Naive thymus-derived CD4-positive, alpha-beta T cell (primary cell): ENCODE measurements at regions of chr6 and their contacts with region 1.

Region 1: GRCh38 chr6:90110971-90111370 is 185.7 kb downstream of the BACH2 start:
- DNase-seq: peak in 8 of 9 donors; percentile 51 to 78 (median 64)
- ATAC-seq: peak; percentile 84
- H3K4me3 ChIP-seq: no peak overlapping the region
- H3K4me3 Mint-ChIP-seq: peak overlapping the region; percentile 35 to 81 (median 58)
- H3K27ac ChIP-seq: peak overlapping the region; percentile 56
- H3K27ac Mint-ChIP-seq: peak overlapping the region; percentile 73 to 92 (median 82)
- H3K4me1 ChIP-seq: peaks cover 26 to 57% of the 10 kb centered on the region in 2 donors
- H3K4me1 Mint-ChIP-seq: peaks cover 36 to 97% (median 90%) of the 10 kb centered on the region in 7 donors
- H3K27me3 ChIP-seq: no peaks in the 10 kb centered on the region
- H3K27me3 Mint-ChIP-seq: no peaks in the 10 kb centered on the region

Region 2: GRCh38 chr6:89432875-89433251 is 678.1 kb before region 1 on chr6 and contains the start of gene ANKRD6:
- CTCF ChIA-PET with region 1: no interaction called
- POLR2A ChIA-PET with region 1: no interaction called
- intact Hi-C with region 1: no loop called
- DNase-seq: peak; percentile 61 to 96 (median 81)
- ATAC-seq: peak; percentile 98
- H3K4me3 ChIP-seq: peak within 1 kb of the TSS; percentile 63
- H3K4me3 Mint-ChIP-seq: peak within 1 kb of the TSS; percentile 83 to 95 (median 90)
- H3K27ac ChIP-seq: peak within 1 kb of the TSS; percentile 46
- H3K27ac Mint-ChIP-seq: peak within 1 kb of the TSS; percentile 43 to 93 (median 82)
- H3K4me1 ChIP-seq: peaks cover 7 to 13% of the 10 kb centered on the region in 2 donors
- H3K4me1 Mint-ChIP-seq: peaks cover 9 to 36% (median 22%) of the 10 kb centered on the region in 7 donors
- H3K27me3 ChIP-seq: no peaks in the 10 kb centered on the region
- H3K27me3 Mint-ChIP-seq: peaks cover 0 to 58% (median 0%) of the 10 kb centered on the region in 5 donors
- total RNA-seq, gene ANKRD6: 3.1 to 6.6 (median 3.8) TPM

Region 3: GRCh38 chr6:90098001-90098531 is 12.9 kb before region 1 on chr6:
- CTCF ChIA-PET with region 1: interaction called, 5 read pairs
- POLR2A ChIA-PET with region 1: interaction called, 5 read pairs
- intact Hi-C with region 1: loop called in 1 of 2 experiments (anchors 1 kb)
- DNase-seq: peak in 4 of 9 donors; percentile 18 to 58 (median 28)
- ATAC-seq: peak; percentile 72
- H3K4me3 ChIP-seq: no peak overlapping the region
- H3K4me3 Mint-ChIP-seq: peak overlapping the region in 9 of 10 donors; percentile 4 to 71 (median 37)
- H3K27ac ChIP-seq: peak overlapping the region; percentile 4
- H3K27ac Mint-ChIP-seq: peak overlapping the region in 8 of 9 donors; percentile 46 to 89 (median 78)
- H3K4me1 ChIP-seq: peaks cover 0 to 59% of the 10 kb centered on the region in 2 donors
- H3K4me1 Mint-ChIP-seq: peaks cover 49 to 97% (median 88%) of the 10 kb centered on the region in 7 donors
- H3K27me3 ChIP-seq: no peaks in the 10 kb centered on the region
- H3K27me3 Mint-ChIP-seq: peaks cover 0 to 4% (median 0%) of the 10 kb centered on the region in 5 donors